ENCODE measurements at regions of chr7 and their contacts with region 1.

Region 1: DNA sequence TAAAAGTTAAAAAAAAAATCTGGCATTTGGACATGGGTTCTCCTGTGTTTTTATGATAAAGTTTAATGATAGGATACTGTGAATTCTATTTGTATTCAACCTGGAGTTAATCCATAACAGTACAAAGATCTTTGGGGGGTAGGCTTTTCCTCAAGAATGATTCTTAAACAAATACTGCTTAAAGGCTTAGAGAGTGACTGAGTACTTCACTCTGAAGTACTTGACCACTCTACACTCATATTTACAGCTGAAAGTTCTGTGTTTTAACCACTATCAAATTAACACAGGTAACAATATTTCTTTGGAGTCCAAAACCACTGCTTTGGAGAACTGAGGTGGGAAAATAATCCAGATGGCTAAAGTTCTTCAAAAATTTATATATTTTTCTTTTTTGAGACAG is 74.2 kb upstream of the TMEM168 start:
- DNase-seq: no peak
- ATAC-seq: no peak
- H3K4me3 ChIP-seq: no peak overlapping the region
- H3K27ac ChIP-seq: no peak overlapping the region
- H3K4me1 ChIP-seq: peaks cover 0 to 22% (median 9%) of the 10 kb centered on the region in 12 donors
- H3K27me3 ChIP-seq: no peaks in the 10 kb centered on the region
- CTCF ChIP-seq: no peak
- POLR2A ChIP-seq: no peak

Region 2: GRCh38 chr7:112799448-112800120 is 64.8 kb before region 1 on chr7:
- intact Hi-C with region 1: loop called in 1 of 10 experiments (anchors 5 kb)
- DNase-seq: no peak
- ATAC-seq: no peak
- H3K4me3 ChIP-seq: no peak overlapping the region
- H3K27ac ChIP-seq: no peak overlapping the region
- H3K4me1 ChIP-seq: peaks cover 0 to 7% (median 0%) of the 10 kb centered on the region in 12 donors
- H3K27me3 ChIP-seq: no peaks in the 10 kb centered on the region
- CTCF ChIP-seq: no peak
- POLR2A ChIP-seq: no peak

Region 3: GRCh38 chr7:112898432-112899290 is 34.3 kb after region 1 on chr7:
- intact Hi-C with region 1: no loop called
- DNase-seq: peak in 1 of 5 donors; percentile 40
- ATAC-seq: peak; percentile 41 to 86 (median 76)
- H3K4me3 ChIP-seq: no peak overlapping the region
- H3K27ac ChIP-seq: no peak overlapping the region
- H3K4me1 ChIP-seq: peaks cover 0 to 32% (median 9%) of the 10 kb centered on the region in 12 donors
- H3K27me3 ChIP-seq: no peaks in the 10 kb centered on the region
- CTCF ChIP-seq: peak; percentile 55 to 80 (median 65)
- POLR2A ChIP-seq: no peak

Region 4: GRCh38 chr7:113015032-113015645 is 150.8 kb after region 1 on chr7:
- intact Hi-C with region 1: no loop called
- DNase-seq: no peak
- ATAC-seq: no peak
- H3K4me3 ChIP-seq: no peak overlapping the region
- H3K27ac ChIP-seq: no peak overlapping the region
- H3K4me1 ChIP-seq: peaks cover 0 to 3% (median 0%) of the 10 kb centered on the region in 12 donors
- H3K27me3 ChIP-seq: no peaks in the 10 kb centered on the region
- CTCF ChIP-seq: peak in 11 of 12 donors; percentile 21 to 61 (median 46)
- POLR2A ChIP-seq: no peak

Region 5: DNA sequence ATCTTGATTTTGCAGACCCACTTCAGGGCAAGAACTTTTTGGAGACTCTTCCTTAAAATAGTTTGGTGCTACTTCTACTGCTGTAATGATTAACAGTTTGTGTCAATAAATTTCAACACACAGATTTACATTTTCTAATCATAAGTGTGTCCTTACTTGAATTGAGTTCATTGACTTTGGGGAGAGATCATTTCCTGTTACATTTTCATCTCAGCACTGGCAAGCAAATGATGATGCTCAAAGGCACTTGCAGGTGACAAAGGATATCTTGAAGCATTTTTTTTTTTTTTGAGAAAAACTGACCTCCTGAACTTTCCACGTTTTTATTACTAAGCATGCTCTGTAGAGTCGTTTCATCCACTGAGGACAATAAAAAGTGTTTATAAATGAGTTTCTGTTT is 169.6 kb after region 1 on chr7:
- intact Hi-C with region 1: no loop called
- DNase-seq: no peak
- ATAC-seq: no peak
- H3K4me3 ChIP-seq: no peak overlapping the region
- H3K27ac ChIP-seq: no peak overlapping the region
- H3K4me1 ChIP-seq: no peaks in the 10 kb centered on the region
- H3K27me3 ChIP-seq: peaks cover 0 to 8% (median 0%) of the 10 kb centered on the region in 9 donors
- CTCF ChIP-seq: no peak
- POLR2A ChIP-seq: no peak

Region 6: DNA sequence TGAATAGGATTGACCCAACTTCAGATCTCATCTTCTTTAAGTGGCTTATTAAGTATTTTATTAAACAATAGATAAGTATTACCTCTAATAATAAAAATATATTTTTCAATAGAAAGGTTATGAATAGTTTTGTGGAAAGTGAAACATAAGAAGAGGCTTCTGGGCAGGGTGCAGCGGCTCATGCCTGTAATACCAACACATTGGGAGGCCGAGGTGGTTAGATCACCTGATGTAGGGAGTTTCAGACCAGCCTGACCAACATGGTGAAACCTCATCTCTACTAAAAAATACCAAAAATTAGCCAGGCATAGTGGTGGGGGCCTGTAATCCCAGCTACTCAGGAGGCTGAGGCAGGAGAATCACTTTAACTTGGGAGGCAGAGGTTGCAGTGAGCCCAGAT is 195.7 kb after region 1 on chr7:
- intact Hi-C with region 1: no loop called
- DNase-seq: no peak
- ATAC-seq: no peak
- H3K4me3 ChIP-seq: no peak overlapping the region
- H3K27ac ChIP-seq: no peak overlapping the region
- H3K4me1 ChIP-seq: no peaks in the 10 kb centered on the region
- H3K27me3 ChIP-seq: no peaks in the 10 kb centered on the region
- CTCF ChIP-seq: no peak
- POLR2A ChIP-seq: no peak